ENCODE measurements at regions of chr22 and their contacts with region 1.

Region 1: GRCh38 chr22:22877523-22878210 is 9.9 kb upstream of the IGLL5 start:
- DNase-seq: peak; percentile 67
- H3K4me3 ChIP-seq: no peak overlapping the region
- H3K27ac ChIP-seq: no peak overlapping the region
- H3K4me1 ChIP-seq: peaks cover 0 to 33% of the 10 kb centered on the region in 2 experiments; a peak in 2 of 4 replicates
- H3K27me3 ChIP-seq: no peaks in the 10 kb centered on the region
- CTCF ChIP-seq: peak; percentile 67
- EP300 ChIP-seq: no peak
- RAD21 ChIP-seq: peak; percentile 79

Region 2: GRCh38 chr22:22770280-22770871 is 107.3 kb before region 1 on chr22:
- CTCF ChIA-PET with region 1: interaction called, 32 read pairs
- POLR2A ChIA-PET with region 1: no interaction called
- DNase-seq: peak; percentile 66
- H3K4me3 ChIP-seq: no peak overlapping the region; a peak in 1 of 4 replicates
- H3K27ac ChIP-seq: no peak overlapping the region
- H3K4me1 ChIP-seq: no peaks in the 10 kb centered on the region; a peak in 1 of 4 replicates
- H3K27me3 ChIP-seq: no peaks in the 10 kb centered on the region; the same call in 1 of the 2 replicates
- CTCF ChIP-seq: peak; percentile 73
- EP300 ChIP-seq: no peak
- RAD21 ChIP-seq: no peak

Region 3: DNA sequence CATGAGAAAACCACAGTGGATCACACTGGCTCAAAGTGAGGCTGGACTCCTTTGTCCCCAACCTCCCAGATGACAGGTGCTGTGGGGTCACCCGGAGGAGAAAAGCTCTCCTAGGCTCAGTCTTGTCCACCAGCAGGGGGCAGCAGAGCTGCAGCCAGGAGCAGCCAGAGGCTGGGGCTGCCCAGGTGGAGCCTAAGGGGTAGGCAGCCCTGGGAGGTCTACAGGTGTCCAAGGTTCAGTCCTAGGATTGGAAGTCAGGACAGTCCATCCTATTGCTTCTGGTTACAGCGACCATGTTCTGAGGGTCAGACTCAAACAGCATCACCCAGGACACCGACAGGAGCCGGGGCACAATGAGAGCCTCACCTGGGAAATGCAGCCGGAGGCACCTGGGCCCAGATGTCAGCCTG is 67.6 kb before region 1 on chr22:
- CTCF ChIA-PET with region 1: interaction called, 12 read pairs
- POLR2A ChIA-PET with region 1: no interaction called
- DNase-seq: peak; percentile 51
- H3K4me3 ChIP-seq: no peak overlapping the region
- H3K27ac ChIP-seq: no peak overlapping the region
- H3K4me1 ChIP-seq: no peaks in the 10 kb centered on the region
- H3K27me3 ChIP-seq: no peaks in the 10 kb centered on the region
- CTCF ChIP-seq: peak; percentile 58
- EP300 ChIP-seq: no peak
- RAD21 ChIP-seq: peak; percentile 34

Region 4: GRCh38 chr22:22855617-22856308 is 21.9 kb before region 1 on chr22:
- CTCF ChIA-PET with region 1: interaction called, 344 read pairs
- POLR2A ChIA-PET with region 1: no interaction called
- DNase-seq: peak; percentile 68
- H3K4me3 ChIP-seq: no peak overlapping the region
- H3K27ac ChIP-seq: no peak overlapping the region
- H3K4me1 ChIP-seq: no peaks in the 10 kb centered on the region; a peak in 1 of 4 replicates
- H3K27me3 ChIP-seq: peaks cover 6% of the 10 kb centered on the region; the same call in 1 of the 2 replicates
- CTCF ChIP-seq: peak; percentile 55
- EP300 ChIP-seq: no peak
- RAD21 ChIP-seq: peak; percentile 60

Region 5: GRCh38 chr22:22865311-22866072 is 12.2 kb before region 1 on chr22:
- CTCF ChIA-PET with region 1: interaction called, 22 read pairs
- POLR2A ChIA-PET with region 1: no interaction called
- DNase-seq: no peak
- H3K4me3 ChIP-seq: no peak overlapping the region
- H3K27ac ChIP-seq: no peak overlapping the region
- H3K4me1 ChIP-seq: no peaks in the 10 kb centered on the region
- H3K27me3 ChIP-seq: no peaks in the 10 kb centered on the region
- CTCF ChIP-seq: no peak
- EP300 ChIP-seq: no peak
- RAD21 ChIP-seq: no peak

Region 6: DNA sequence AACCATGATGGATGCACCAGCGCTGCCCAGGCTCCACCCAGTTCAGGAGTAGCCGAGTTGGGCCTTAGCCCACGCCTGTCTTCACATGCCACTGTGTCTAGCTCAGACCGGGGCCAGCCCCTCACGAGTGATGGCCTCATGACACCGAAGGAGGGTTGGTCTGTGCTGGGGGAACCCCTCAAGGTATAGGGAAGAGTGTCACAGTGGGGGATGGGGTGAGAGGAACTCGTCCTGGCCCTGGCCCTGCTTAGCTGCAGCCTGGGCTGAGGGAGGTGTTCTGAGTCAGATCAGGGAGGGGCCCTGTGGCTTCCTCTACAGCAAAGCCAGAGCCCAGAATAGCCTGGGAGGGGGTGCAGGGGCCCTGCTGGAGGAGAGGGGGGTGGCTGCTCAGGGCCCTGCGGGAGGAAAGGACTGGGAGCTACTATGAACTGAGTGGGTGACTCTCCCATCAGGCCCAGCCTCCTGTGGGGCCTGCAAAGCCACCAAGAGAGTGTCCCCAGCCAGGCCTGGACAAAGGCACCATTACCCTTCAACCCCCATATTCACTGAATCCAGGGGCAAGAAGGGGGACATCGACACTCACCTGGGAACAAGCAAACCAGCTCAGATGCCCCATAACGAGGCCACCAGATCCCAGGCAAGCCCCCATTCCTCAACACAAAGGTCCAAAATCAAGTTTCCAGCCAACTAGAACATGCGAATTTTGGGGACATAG is 51.2 kb after region 1 on chr22:
- CTCF ChIA-PET with region 1: interaction called, 26 read pairs
- POLR2A ChIA-PET with region 1: no interaction called
- DNase-seq: no peak
- H3K4me3 ChIP-seq: no peak overlapping the region
- H3K27ac ChIP-seq: no peak overlapping the region
- H3K4me1 ChIP-seq: peaks cover 0 to 4% of the 10 kb centered on the region in 2 experiments; a peak in 1 of 4 replicates
- H3K27me3 ChIP-seq: no peaks in the 10 kb centered on the region
- CTCF ChIP-seq: no peak
- EP300 ChIP-seq: no peak
- RAD21 ChIP-seq: no peak

Region 7: GRCh38 chr22:22981670-22982571 is 104.3 kb after region 1 on chr22:
- CTCF ChIA-PET with region 1: no interaction called
- POLR2A ChIA-PET with region 1: no interaction called
- DNase-seq: no peak
- H3K4me3 ChIP-seq: no peak overlapping the region
- H3K27ac ChIP-seq: no peak overlapping the region
- H3K4me1 ChIP-seq: no peaks in the 10 kb centered on the region
- H3K27me3 ChIP-seq: peaks cover 10% of the 10 kb centered on the region; the same call in 1 of the 2 replicates
- CTCF ChIP-seq: no peak
- EP300 ChIP-seq: no peak
- RAD21 ChIP-seq: no peak

Region 8: GRCh38 chr22:23088199-23088604 is 210.5 kb after region 1 on chr22:
- CTCF ChIA-PET with region 1: no interaction called
- POLR2A ChIA-PET with region 1: no interaction called
- DNase-seq: no peak
- H3K4me3 ChIP-seq: no peak overlapping the region
- H3K27ac ChIP-seq: no peak overlapping the region
- H3K4me1 ChIP-seq: no peaks in the 10 kb centered on the region; a peak in 1 of 4 replicates
- H3K27me3 ChIP-seq: no peaks in the 10 kb centered on the region
- CTCF ChIP-seq: no peak
- EP300 ChIP-seq: no peak
- RAD21 ChIP-seq: no peak